Panc1 (cell line): ENCODE measurements at regions of chr11 and their contacts with region 1.

Region 1: GRCh38 chr11:101668236-101668635 is 84.4 kb upstream of the TRPC6 start:
- DNase-seq: no peak
- ATAC-seq: no peak
- H3K4me3 ChIP-seq: no peak overlapping the region
- H3K27ac ChIP-seq: no peak overlapping the region
- H3K4me1 ChIP-seq: no peaks in the 10 kb centered on the region
- H3K27me3 ChIP-seq: no peaks in the 10 kb centered on the region
- CTCF ChIP-seq: no peak

Region 2: GRCh38 chr11:100902454-100903141 is 765.6 kb before region 1 on chr11:
- CTCF ChIA-PET with region 1: no interaction called
- POLR2A ChIA-PET with region 1: no interaction called
- in situ Hi-C with region 1: no loop called
- intact Hi-C with region 1: no loop called
- DNase-seq: no peak
- ATAC-seq: peak; percentile 38; the same call in 1 of the 2 replicates
- H3K4me3 ChIP-seq: no peak overlapping the region
- H3K27ac ChIP-seq: no peak overlapping the region
- H3K4me1 ChIP-seq: peaks cover 3% of the 10 kb centered on the region; the same call in 1 of the 2 replicates
- H3K27me3 ChIP-seq: no peaks in the 10 kb centered on the region
- CTCF ChIP-seq: no peak

Region 3: DNA sequence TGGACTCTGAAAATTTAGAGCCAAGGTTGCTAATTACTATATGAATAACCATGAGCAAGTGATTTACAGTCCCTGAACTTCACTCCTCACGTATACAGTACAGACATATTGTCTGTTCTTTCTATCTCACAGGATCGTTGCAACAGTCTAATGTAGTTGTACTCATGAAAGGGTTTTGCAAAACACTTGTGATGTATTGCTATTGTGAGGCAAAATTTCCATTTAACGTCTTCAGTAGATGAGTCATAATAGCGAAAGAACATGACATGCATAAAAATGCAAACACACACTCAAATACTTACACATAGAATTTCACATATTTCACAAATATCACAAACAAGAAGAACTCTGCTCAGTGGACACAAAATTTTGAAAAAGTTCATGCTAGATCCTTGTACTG is 50.2 kb after region 1 on chr11:
- CTCF ChIA-PET with region 1: no interaction called
- POLR2A ChIA-PET with region 1: no interaction called
- in situ Hi-C with region 1: no loop called
- intact Hi-C with region 1: loop called (anchors 10 kb)
- DNase-seq: no peak
- ATAC-seq: no peak
- H3K4me3 ChIP-seq: no peak overlapping the region
- H3K27ac ChIP-seq: no peak overlapping the region
- H3K4me1 ChIP-seq: no peaks in the 10 kb centered on the region
- H3K27me3 ChIP-seq: no peaks in the 10 kb centered on the region
- CTCF ChIP-seq: no peak

Region 4: GRCh38 chr11:101825531-101825930 is 157.3 kb after region 1 on chr11:
- CTCF ChIA-PET with region 1: no interaction called
- POLR2A ChIA-PET with region 1: no interaction called
- in situ Hi-C with region 1: no loop called
- intact Hi-C with region 1: no loop called
- DNase-seq: no peak
- ATAC-seq: no peak
- H3K4me3 ChIP-seq: no peak overlapping the region
- H3K27ac ChIP-seq: no peak overlapping the region
- H3K4me1 ChIP-seq: no peaks in the 10 kb centered on the region
- H3K27me3 ChIP-seq: no peaks in the 10 kb centered on the region
- CTCF ChIP-seq: no peak

Region 5: GRCh38 chr11:101866619-101867491 is 198.6 kb after region 1 on chr11:
- CTCF ChIA-PET with region 1: no interaction called
- POLR2A ChIA-PET with region 1: no interaction called
- in situ Hi-C with region 1: no loop called
- intact Hi-C with region 1: no loop called
- DNase-seq: no peak
- ATAC-seq: no peak
- H3K4me3 ChIP-seq: no peak overlapping the region
- H3K27ac ChIP-seq: no peak overlapping the region
- H3K4me1 ChIP-seq: peaks cover 7% of the 10 kb centered on the region; the same call in 1 of the 2 replicates
- H3K27me3 ChIP-seq: no peaks in the 10 kb centered on the region
- CTCF ChIP-seq: no peak